ENCODE measurements at regions of chr11 and their contacts with region 1.

Region 1: GRCh38 chr11:122344274-122344673 is 228.3 kb upstream of the BLID start:
- DNase-seq: no peak

Region 2: GRCh38 chr11:121909596-121909995 is 434.7 kb before region 1 on chr11:
- intact Hi-C with region 1: no loop called
- DNase-seq: no peak

Region 3: GRCh38 chr11:122020902-122021301 is 323.4 kb before region 1 on chr11:
- intact Hi-C with region 1: loop called in 1 of 2 experiments (anchors 5 kb)
- DNase-seq: no peak

Region 4: GRCh38 chr11:122215244-122215992 is 128.9 kb before region 1 on chr11:
- intact Hi-C with region 1: loop called in 1 of 2 experiments (anchors 10 kb)
- DNase-seq: peak; percentile 95

Measured in posterior vena cava (tissue), 2 donors.